ENCODE measurements at regions of chr14 and their contacts with region 1.

Region 1: DNA sequence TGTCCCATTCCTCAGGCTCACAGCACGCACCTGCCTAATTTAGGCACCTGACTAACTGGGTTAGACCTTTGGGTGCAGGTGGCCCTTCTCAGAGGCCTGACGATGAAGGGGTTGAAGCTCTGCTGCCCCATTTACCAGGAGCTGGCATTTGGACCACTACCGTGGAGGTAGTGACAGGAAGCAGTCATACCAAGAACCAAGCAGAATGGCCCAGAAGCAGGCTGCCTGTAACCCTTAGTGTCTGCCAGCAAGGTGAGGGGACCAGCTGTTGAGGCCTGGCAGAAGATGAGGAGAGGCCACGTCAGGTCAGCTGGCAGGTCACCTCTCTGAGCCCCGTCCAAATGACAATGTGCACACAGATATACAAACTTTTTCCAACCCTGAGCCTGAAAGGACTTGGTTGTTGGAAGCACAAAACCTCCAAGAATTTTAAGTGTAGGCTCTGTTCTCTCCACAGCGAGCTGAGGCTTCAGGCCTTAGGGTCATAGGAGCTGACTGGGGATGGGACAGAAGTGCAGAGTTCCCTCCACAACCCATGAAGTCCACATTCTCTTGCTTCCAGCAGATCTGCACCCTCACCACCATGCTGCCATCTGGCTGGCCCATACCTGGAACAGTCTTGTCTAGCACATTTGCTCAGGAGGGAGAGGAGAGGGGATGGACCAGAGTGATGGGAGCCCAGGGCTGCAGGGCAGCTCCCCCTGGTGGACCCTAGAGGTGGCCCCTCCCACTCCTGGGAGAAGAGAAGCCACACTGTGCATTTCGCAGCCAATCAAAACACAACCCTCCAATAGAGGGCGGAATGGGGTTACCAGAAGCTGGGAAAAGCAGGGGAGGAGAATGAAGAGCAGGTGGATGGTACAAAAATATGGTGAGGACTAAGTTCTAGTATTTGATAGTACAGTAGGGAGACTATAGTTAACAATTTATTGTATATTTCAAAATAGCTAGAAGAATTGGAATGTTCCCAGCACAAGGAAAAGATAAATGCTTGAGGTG is 23.3 kb downstream of the VASH1 start:
- DNase-seq: peak; percentile 92
- H3K4me3 ChIP-seq: peak overlapping the region in 1 of 2 experiments; percentile 33; a peak in 1 of 4 replicates
- H3K27ac ChIP-seq: no peak overlapping the region; a peak in 1 of 4 replicates
- H3K4me1 ChIP-seq: peaks cover 14 to 33% of the 10 kb centered on the region in 2 experiments; a peak in 2 of 4 replicates
- H3K27me3 ChIP-seq: no peaks in the 10 kb centered on the region
- CTCF ChIP-seq: peak; percentile 94
- EP300 ChIP-seq: no peak; a peak in 1 of 4 replicates
- RAD21 ChIP-seq: peak; percentile 78

Region 2: GRCh38 chr14:76720382-76720813 is 64.2 kb before region 1 on chr14:
- CTCF ChIA-PET with region 1: interaction called, 147 read pairs
- POLR2A ChIA-PET with region 1: no interaction called
- DNase-seq: peak; percentile 80
- H3K4me3 ChIP-seq: no peak overlapping the region
- H3K27ac ChIP-seq: peak overlapping the region in 1 of 2 experiments; percentile 83; a peak in 2 of 4 replicates
- H3K4me1 ChIP-seq: peaks cover 0 to 16% of the 10 kb centered on the region in 2 experiments; a peak in 2 of 4 replicates
- H3K27me3 ChIP-seq: peaks cover 9% of the 10 kb centered on the region; the same call in 1 of the 2 replicates
- CTCF ChIP-seq: no peak
- EP300 ChIP-seq: no peak
- RAD21 ChIP-seq: no peak

Region 3: GRCh38 chr14:76767681-76768656 is 16.6 kb before region 1 on chr14:
- CTCF ChIA-PET with region 1: interaction called, 19 read pairs
- POLR2A ChIA-PET with region 1: interaction called, 3 read pairs
- DNase-seq: peak; percentile 76
- H3K4me3 ChIP-seq: no peak overlapping the region
- H3K27ac ChIP-seq: peak overlapping the region in 1 of 2 experiments; percentile 75; a peak in 2 of 4 replicates
- H3K4me1 ChIP-seq: peaks cover 5 to 38% of the 10 kb centered on the region in 2 experiments; a peak in 2 of 4 replicates
- H3K27me3 ChIP-seq: no peaks in the 10 kb centered on the region
- CTCF ChIP-seq: no peak
- EP300 ChIP-seq: no peak
- RAD21 ChIP-seq: no peak

Region 4: DNA sequence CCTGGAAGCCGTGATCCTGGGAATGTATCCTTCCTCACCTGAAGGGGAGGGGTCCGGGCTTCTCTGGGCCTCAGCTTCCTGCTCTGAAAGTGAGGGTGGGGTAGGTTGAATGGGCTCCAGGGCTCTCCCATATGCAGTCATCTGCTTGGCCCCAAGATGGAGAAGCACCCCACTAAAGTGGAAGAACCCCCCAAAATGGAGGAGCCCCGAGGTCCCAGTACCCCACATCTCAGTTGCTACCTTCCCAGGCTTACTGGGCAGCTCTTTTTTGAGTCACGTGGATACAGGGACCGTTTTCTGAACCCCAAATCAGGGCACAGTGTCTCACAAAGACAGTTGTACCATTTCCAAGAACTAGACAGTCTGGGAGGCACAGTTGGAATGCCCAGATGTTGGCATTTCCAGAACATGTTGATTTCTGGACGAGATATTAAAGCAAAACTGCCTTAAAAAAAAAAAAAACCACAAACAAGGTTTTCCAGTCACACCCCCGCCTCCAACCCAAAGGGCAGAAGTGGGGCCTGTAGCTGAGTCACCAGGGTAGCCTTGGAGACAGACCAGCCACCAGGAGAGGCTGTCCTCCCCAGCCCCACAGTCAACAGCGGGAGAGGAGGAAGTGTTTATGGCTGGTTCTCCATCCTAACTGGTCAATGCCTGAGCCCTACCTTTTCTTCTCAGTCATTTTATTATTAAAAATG is 11.2 kb before region 1 on chr14:
- CTCF ChIA-PET with region 1: interaction called, 19 read pairs
- POLR2A ChIA-PET with region 1: interaction called, 3 read pairs
- DNase-seq: peak; percentile 69
- H3K4me3 ChIP-seq: no peak overlapping the region
- H3K27ac ChIP-seq: peak overlapping the region; percentile 64 to 75
- H3K4me1 ChIP-seq: peaks cover 14 to 30% of the 10 kb centered on the region in 2 experiments
- H3K27me3 ChIP-seq: no peaks in the 10 kb centered on the region
- CTCF ChIP-seq: peak; percentile 16; the same call in 1 of the 2 replicates
- EP300 ChIP-seq: no peak; a peak in 1 of 4 replicates
- RAD21 ChIP-seq: no peak

Region 5: DNA sequence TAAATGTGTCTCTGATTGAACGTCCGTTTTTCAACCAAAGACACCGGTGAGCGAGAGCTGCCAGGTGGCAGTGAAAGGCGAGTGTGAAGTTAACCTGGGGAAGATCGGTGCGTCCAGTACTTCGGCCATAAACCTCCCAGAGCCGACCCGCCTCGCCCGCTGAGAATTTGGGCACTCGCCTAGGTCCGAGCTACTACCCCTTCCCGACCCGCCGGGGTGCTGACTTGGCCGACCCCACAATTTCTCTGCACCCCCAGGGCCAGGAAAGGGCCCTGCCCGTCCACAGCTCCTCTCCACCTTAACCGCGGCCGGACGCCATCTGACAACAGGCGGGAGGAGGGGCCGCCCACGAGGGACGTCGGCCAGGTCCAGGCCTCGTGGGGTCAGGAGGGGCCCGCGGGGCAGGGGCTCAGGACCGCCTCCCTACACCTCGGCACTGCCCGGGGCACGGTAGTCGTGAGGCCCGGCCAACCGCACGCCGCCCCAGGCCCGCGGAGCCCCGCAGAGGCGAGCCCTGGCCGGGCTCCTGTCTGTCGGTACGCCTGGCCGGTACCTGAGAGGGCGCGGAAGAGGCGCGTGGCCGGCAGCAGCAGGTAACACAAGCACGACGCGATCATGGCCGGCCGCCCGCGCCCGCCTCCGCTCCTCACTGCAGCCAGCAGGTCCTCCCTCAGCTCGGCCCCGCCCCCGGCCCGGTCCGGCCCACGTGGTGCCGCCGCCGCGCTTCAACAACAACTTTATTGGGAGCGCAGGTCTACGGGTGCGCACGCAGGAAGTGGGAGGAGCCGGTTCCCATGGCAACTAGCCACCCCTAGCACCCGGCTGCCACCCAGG is 27.9 kb after region 1 on chr14 and contains the start of gene ANGEL1:
- CTCF ChIA-PET with region 1: interaction called, 29 read pairs
- POLR2A ChIA-PET with region 1: interaction called, 6 read pairs
- DNase-seq: peak; percentile 97
- H3K4me3 ChIP-seq: peak within 1 kb of the TSS; percentile 88 to 89
- H3K27ac ChIP-seq: peak within 1 kb of the TSS; percentile 7 to 72; a peak in 2 of 4 replicates
- H3K4me1 ChIP-seq: peaks cover 6 to 16% of the 10 kb centered on the region in 2 experiments; a peak in 3 of 4 replicates
- H3K27me3 ChIP-seq: peaks cover 3% of the 10 kb centered on the region
- CTCF ChIP-seq: no peak
- EP300 ChIP-seq: peak in 1 of 2 experiments; percentile 51; a peak in 1 of 4 replicates
- RAD21 ChIP-seq: no peak
- polyA plus RNA-seq, gene ANGEL1: 14.1 and 20.7 TPM in 2 replicates

Region 6: DNA sequence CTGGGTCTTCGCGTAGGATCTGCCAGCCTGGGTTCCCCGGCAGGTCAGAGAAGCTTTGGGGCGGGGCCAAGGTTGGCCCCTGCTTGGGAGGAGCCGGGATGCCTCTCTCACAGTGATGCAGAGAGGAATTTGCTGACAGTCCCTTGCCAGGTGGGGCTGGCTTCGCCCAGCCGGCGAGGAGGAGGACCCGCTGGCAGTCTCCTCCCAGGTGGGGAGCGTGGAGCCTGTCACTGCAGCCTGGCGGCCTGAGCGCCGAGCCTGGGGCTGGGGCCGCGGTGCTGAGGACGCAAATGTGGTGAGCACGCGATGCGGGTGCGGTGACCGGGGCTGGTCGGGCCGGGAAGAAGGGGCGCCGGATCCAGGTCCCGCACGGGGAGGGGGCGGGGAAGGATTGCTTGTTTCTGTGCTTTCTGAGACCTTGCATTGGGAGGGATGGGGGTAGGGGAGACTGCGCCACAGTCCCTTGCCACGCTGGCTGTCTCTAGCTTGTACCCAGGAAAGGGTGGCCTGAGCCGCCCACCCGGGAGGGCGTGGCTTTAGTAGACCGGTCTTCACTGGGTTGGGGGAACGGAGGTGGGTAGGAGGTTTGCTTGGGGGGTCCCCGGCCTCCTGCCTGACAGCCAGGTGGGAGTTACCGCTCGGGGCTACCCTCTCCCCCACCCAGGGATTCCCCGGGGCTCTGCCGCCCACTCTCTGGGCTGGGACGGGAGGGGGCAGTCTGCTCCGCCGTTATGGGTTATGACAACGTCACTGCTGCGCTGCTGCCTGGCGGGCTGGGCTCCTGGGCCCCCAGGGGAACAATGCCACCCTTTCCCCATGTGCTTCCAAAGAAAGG is 397.3 kb after region 1 on chr14 and contains the start of gene TMEM63C:
- CTCF ChIA-PET with region 1: no interaction called
- POLR2A ChIA-PET with region 1: no interaction called
- DNase-seq: peak; percentile 94
- H3K4me3 ChIP-seq: peak within 1 kb of the TSS; percentile 59 to 63
- H3K27ac ChIP-seq: peak within 1 kb of the TSS in 1 of 2 experiments; percentile 82; a peak in 2 of 4 replicates
- H3K4me1 ChIP-seq: peaks cover 7 to 17% of the 10 kb centered on the region in 2 experiments; a peak in 2 of 4 replicates
- H3K27me3 ChIP-seq: no peaks in the 10 kb centered on the region
- CTCF ChIP-seq: no peak; the same call in 1 of the 2 replicates
- EP300 ChIP-seq: no peak
- RAD21 ChIP-seq: no peak
- polyA plus RNA-seq, gene TMEM63C: 0.25 and 0.52 TPM in 2 replicates